ENCODE measurements at regions of chr2 and their contacts with region 1.

Region 1: DNA sequence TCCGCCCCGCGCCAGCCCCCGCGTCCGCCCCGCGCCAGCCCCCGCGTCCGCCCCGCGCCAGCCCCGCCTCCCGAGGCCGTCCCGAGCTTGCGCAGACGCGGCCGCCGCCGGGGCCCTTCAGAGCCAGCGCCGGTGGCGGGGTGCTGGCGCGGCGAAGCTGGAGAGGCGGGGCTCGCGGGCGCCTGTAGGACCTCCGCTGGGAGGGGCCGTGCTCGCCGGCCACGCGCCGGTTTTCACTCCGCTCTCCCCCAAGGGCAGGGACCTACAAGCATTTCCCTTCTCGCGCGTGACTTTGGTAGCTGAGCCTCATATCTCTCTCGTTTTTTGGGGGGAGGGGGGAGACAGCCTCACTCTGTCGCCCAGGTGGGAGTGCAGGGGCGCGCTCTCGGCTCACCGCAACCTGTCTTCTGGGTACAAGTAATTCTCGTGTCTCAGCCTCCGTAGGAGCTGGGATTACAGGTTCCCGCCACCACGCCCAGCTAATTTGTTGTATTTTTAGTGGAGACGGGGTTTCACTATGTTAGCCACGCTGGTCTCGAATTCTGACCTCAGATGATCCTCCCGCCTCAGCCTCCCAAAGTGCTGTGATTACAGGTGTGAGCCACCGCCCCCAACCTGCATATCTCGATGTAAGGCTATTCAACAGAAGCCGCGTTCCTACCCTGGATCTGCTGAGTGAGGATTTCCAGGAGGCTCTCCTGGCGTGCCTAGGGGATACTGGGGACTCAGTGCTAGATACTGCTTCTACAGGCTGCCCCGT is at the start of gene ZNF514:
- DNase-seq: peak; percentile 49 to 90 (median 71)
- ATAC-seq: peak; percentile 85
- H3K4me3 ChIP-seq: peak within 1 kb of the TSS; percentile 95
- H3K4me3 Mint-ChIP-seq: peak within 1 kb of the TSS; percentile 95
- H3K27ac ChIP-seq: peak within 1 kb of the TSS; percentile 33 to 62
- H3K27ac Mint-ChIP-seq: peak within 1 kb of the TSS; percentile 86
- H3K4me1 ChIP-seq: peaks cover 22% of the 10 kb centered on the region
- H3K4me1 Mint-ChIP-seq: peaks cover 29% of the 10 kb centered on the region
- H3K27me3 ChIP-seq: no peaks in the 10 kb centered on the region
- H3K27me3 Mint-ChIP-seq: no peaks in the 10 kb centered on the region
- CTCF ChIP-seq: no peak
- total RNA-seq, gene ZNF514: 4.7 to 6.3 TPM

Region 2: DNA sequence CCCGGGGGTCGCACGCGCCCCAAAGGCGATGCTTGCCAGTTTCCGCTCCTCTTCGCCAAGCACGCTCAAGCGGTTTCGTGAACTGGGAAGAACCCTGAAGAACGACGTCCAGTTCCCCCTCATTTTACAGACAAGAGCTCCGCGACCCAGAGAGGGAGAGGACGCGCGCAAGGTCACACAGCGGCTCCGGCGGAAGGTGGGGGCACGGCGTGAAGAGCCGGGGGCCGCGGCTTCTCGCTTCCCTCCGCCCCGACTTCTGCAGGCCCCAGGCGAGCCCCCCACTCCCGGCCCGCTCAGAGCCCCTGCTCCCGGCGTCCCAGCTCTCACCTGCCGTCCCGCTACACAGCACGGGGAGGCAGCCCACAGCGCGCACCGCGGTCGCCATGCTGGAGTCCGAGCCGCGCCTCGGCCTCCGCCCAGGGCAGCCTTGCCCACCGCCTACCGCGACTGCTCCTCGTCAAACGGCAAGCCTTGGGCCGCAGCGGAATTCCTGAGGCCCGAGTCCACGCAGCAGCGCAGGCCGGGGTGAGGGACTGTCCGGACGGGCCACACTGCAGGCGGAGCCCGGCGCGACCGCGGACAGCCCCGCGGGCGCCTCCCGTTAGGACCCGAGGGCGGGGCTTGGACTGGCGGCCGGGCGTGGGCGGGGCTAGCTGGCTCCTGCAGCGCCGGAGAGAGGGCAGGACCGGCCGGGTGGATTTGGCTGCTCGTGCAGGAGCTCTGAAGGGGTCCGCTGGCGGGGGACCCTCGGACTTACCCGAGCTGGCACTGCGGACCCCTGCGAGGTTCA is 38.3 kb before region 1 on chr2 and contains the start of gene MRPS5:
- CTCF ChIA-PET with region 1: interaction called, 6 read pairs
- POLR2A ChIA-PET with region 1: interaction called, 46 read pairs
- intact Hi-C with region 1: loop called (anchors 1 to 5 kb)
- DNase-seq: peak; percentile 68 to 91 (median 82)
- ATAC-seq: peak; percentile 89
- H3K4me3 ChIP-seq: peak within 1 kb of the TSS; percentile 81
- H3K4me3 Mint-ChIP-seq: peak within 1 kb of the TSS; percentile 95
- H3K27ac ChIP-seq: peak within 1 kb of the TSS; percentile 59 to 74
- H3K27ac Mint-ChIP-seq: peak within 1 kb of the TSS; percentile 94
- H3K4me1 ChIP-seq: peaks cover 31% of the 10 kb centered on the region
- H3K4me1 Mint-ChIP-seq: peaks cover 52% of the 10 kb centered on the region
- H3K27me3 ChIP-seq: no peaks in the 10 kb centered on the region
- H3K27me3 Mint-ChIP-seq: no peaks in the 10 kb centered on the region
- CTCF ChIP-seq: no peak
- total RNA-seq, gene MRPS5: 15.3 to 16.3 TPM

Region 3: GRCh38 chr2:95259765-95260417 is 100.0 kb after region 1 on chr2:
- CTCF ChIA-PET with region 1: no interaction called
- POLR2A ChIA-PET with region 1: no interaction called
- intact Hi-C with region 1: no loop called
- DNase-seq: no peak
- ATAC-seq: no peak
- H3K4me3 ChIP-seq: no peak overlapping the region
- H3K4me3 Mint-ChIP-seq: no peak overlapping the region
- H3K27ac ChIP-seq: no peak overlapping the region
- H3K27ac Mint-ChIP-seq: no peak overlapping the region
- H3K4me1 ChIP-seq: no peaks in the 10 kb centered on the region
- H3K4me1 Mint-ChIP-seq: no peaks in the 10 kb centered on the region
- H3K27me3 ChIP-seq: peaks cover 0 to 4% of the 10 kb centered on the region in 2 experiments
- H3K27me3 Mint-ChIP-seq: peaks cover 25% of the 10 kb centered on the region
- CTCF ChIP-seq: no peak